HepG2 (cell line): ENCODE measurements at regions of chr2 and their contacts with region 1.

Region 1: DNA sequence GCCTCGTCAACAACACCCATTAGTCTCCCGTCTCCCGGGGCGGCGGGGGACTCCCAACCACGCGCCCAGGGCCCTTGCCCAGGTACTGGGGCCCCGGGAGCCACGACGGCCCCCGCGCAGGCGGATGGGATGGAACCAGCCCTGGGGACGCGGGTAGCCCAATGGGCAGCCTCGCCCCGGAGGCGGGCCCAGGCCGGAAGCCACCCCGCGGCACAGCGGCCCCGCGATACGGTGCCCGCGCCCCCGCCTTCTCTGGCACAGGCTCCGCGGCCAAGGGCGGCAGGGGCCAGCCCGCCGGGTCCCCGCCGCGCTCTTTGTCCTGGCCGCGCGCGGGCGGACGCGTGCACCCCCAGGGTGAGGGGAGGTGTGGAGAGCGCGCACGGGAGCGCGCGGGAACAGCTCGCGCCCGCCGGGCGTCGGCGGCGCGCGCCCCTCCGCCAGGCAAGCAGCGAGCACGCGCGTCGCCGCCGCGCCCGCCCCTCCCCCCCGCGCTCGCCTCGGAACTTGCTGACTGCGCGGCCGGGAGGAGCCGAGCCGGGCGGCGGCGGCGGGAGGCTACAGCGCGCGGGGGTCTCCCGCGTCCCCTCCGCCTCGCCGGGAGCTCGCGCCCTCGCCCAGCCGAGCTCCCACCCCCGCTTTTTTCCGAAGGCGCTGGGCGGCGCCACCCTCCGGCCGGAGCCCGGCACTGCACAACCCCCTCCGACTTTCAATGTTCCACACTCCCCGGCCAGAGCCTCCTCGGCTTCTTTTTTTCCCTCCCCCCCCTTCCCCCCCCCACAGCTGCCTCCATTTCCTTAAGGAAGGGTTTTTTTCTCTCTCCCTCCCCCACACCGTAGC is at the start of gene UBE2E3:
- DNase-seq: peak; percentile 67
- ATAC-seq: peak; percentile 90
- H3K4me3 ChIP-seq: peak within 1 kb of the TSS; percentile 66 to 100 (median 86)
- H3K27ac ChIP-seq: peak within 1 kb of the TSS; percentile 57
- H3K4me1 ChIP-seq: peaks cover 57% of the 10 kb centered on the region
- H3K27me3 ChIP-seq: no peaks in the 10 kb centered on the region; a peak in 1 of 5 replicates
- CTCF ChIP-seq: peak; percentile 73
- EP300 ChIP-seq: no peak
- POLR2A ChIP-seq: peak; percentile 60 to 76
- RAD21 ChIP-seq: peak; percentile 85; the same call in 1 of the 2 replicates
- total RNA-seq, gene UBE2E3: 45.7 and 54.0 TPM in 2 replicates

Region 2: GRCh38 chr2:180006781-180007579 is 973.3 kb before region 1 on chr2 and contains the start of gene CWC22:
- CTCF ChIA-PET with region 1: no interaction called
- POLR2A ChIA-PET with region 1: interaction called, 4 read pairs
- in situ Hi-C with region 1: no loop called
- intact Hi-C with region 1: loop called (anchors 10 kb)
- DNase-seq: peak; percentile 93
- ATAC-seq: peak; percentile 96
- H3K4me3 ChIP-seq: peak within 1 kb of the TSS; percentile 76 to 94 (median 93)
- H3K27ac ChIP-seq: peak within 1 kb of the TSS; percentile 87
- H3K4me1 ChIP-seq: peaks cover 33% of the 10 kb centered on the region
- H3K27me3 ChIP-seq: no peaks in the 10 kb centered on the region; a peak in 1 of 5 replicates
- CTCF ChIP-seq: no peak
- EP300 ChIP-seq: peak in 1 of 2 experiments; percentile 70; a peak in 1 of 4 replicates
- POLR2A ChIP-seq: peak; percentile 56 to 71; a peak in 3 of 4 replicates
- RAD21 ChIP-seq: peak; percentile 30; the same call in 1 of the 2 replicates
- total RNA-seq, gene CWC22: 29.2 and 52.2 TPM in 2 replicates

Region 3: GRCh38 chr2:180289627-180290026 is 690.7 kb before region 1 on chr2:
- CTCF ChIA-PET with region 1: no interaction called
- POLR2A ChIA-PET with region 1: no interaction called
- in situ Hi-C with region 1: no loop called
- intact Hi-C with region 1: loop called (anchors 10 kb)
- DNase-seq: peak; percentile 68
- ATAC-seq: peak; percentile 98
- H3K4me3 ChIP-seq: no peak overlapping the region
- H3K27ac ChIP-seq: no peak overlapping the region
- H3K4me1 ChIP-seq: peaks cover 19% of the 10 kb centered on the region
- H3K27me3 ChIP-seq: no peaks in the 10 kb centered on the region
- CTCF ChIP-seq: no peak
- EP300 ChIP-seq: peak in 1 of 2 experiments; percentile 71; a peak in 2 of 4 replicates
- POLR2A ChIP-seq: no peak
- RAD21 ChIP-seq: no peak

Region 4: DNA sequence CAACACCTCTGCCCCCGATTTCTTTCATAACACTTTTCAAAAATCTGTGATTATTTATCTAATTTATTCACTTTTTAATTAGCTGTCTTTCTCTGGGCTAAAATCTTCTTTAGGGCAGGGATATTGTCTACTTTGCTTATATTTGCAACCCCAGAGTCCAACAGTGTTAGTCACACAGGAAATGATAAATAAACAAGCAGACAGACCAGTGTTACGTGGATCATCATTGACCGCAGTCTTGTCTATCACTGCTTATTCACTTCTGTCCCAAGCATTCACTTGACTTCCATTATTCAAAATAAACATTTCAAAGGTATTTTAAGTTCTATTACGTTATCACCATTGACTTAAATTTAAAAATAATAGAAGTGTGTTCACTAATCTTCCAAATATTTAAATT is 237.5 kb before region 1 on chr2:
- CTCF ChIA-PET with region 1: no interaction called
- POLR2A ChIA-PET with region 1: no interaction called
- in situ Hi-C with region 1: no loop called
- intact Hi-C with region 1: loop called (anchors 5 kb)
- DNase-seq: peak; percentile 34
- ATAC-seq: peak; percentile 88
- H3K4me3 ChIP-seq: no peak overlapping the region
- H3K27ac ChIP-seq: no peak overlapping the region
- H3K4me1 ChIP-seq: peaks cover 14% of the 10 kb centered on the region
- H3K27me3 ChIP-seq: no peaks in the 10 kb centered on the region
- CTCF ChIP-seq: no peak
- EP300 ChIP-seq: peak in 1 of 2 experiments; percentile 42; a peak in 1 of 4 replicates
- POLR2A ChIP-seq: no peak
- RAD21 ChIP-seq: no peak

Region 5: DNA sequence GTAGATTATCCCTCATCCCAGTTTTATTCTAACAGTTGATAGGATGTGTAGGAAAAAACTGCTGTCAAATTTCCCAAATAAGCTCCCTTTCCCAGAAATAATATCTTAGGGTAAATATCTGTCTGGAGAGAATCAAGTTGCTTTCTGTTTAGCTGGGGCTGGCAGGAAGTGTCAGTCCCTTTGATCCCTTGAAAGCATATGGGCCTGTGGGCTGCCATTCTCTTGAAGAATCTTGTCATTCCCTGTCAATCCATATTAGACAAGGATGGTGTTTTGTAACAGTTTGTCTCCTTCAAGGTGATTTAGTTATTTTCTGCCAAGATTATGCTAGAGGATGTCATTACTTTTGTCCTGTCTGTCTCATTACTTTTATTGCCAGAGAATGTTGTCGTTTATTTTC is 37.0 kb before region 1 on chr2:
- CTCF ChIA-PET with region 1: no interaction called
- POLR2A ChIA-PET with region 1: no interaction called
- in situ Hi-C with region 1: no loop called
- intact Hi-C with region 1: no loop called
- DNase-seq: no peak
- ATAC-seq: no peak
- H3K4me3 ChIP-seq: no peak overlapping the region
- H3K27ac ChIP-seq: no peak overlapping the region
- H3K4me1 ChIP-seq: no peaks in the 10 kb centered on the region
- H3K27me3 ChIP-seq: no peaks in the 10 kb centered on the region
- CTCF ChIP-seq: no peak
- EP300 ChIP-seq: no peak
- POLR2A ChIP-seq: no peak
- RAD21 ChIP-seq: no peak

Region 6: GRCh38 chr2:180970016-180970415 is 10.3 kb before region 1 on chr2:
- CTCF ChIA-PET with region 1: no interaction called
- POLR2A ChIA-PET with region 1: interaction called, 8 read pairs
- in situ Hi-C with region 1: no loop called
- intact Hi-C with region 1: loop called (anchors 1 kb)
- DNase-seq: peak; percentile 74
- ATAC-seq: peak; percentile 92
- H3K4me3 ChIP-seq: no peak overlapping the region
- H3K27ac ChIP-seq: no peak overlapping the region
- H3K4me1 ChIP-seq: peaks cover 6% of the 10 kb centered on the region
- H3K27me3 ChIP-seq: no peaks in the 10 kb centered on the region
- CTCF ChIP-seq: no peak
- EP300 ChIP-seq: no peak
- POLR2A ChIP-seq: no peak
- RAD21 ChIP-seq: no peak

Region 7: GRCh38 chr2:181058378-181059269 is 78.3 kb after region 1 on chr2:
- CTCF ChIA-PET with region 1: no interaction called
- POLR2A ChIA-PET with region 1: no interaction called
- in situ Hi-C with region 1: no loop called
- intact Hi-C with region 1: loop called (anchors 1 kb)
- DNase-seq: peak; percentile 60
- ATAC-seq: peak; percentile 81
- H3K4me3 ChIP-seq: no peak overlapping the region
- H3K27ac ChIP-seq: no peak overlapping the region
- H3K4me1 ChIP-seq: no peaks in the 10 kb centered on the region
- H3K27me3 ChIP-seq: no peaks in the 10 kb centered on the region
- CTCF ChIP-seq: peak; percentile 84
- EP300 ChIP-seq: no peak
- POLR2A ChIP-seq: no peak
- RAD21 ChIP-seq: peak; percentile 76